Activated CD8-positive, alpha-beta T cell treated with anti-CD3 and anti-CD28 coated beads, Interleukin-2, amount 10 ng/mL, durations not matched to agents 7 days and 5 days (primary cell): ENCODE measurements at regions of chr11 and their contacts with region 1.

Region 1: GRCh38 chr11:114262681-114263512 is 33.3 kb upstream of the NNMT start:
- DNase-seq: peak; percentile 55
- ATAC-seq: peak; percentile 63
- H3K4me3 Mint-ChIP-seq: no peak overlapping the region
- H3K27ac Mint-ChIP-seq: no peak overlapping the region
- H3K4me1 Mint-ChIP-seq: peaks cover 24% of the 10 kb centered on the region
- H3K27me3 Mint-ChIP-seq: peaks cover 2% of the 10 kb centered on the region

Region 2: GRCh38 chr11:113806406-113806805 is 456.5 kb before region 1 on chr11:
- CTCF ChIA-PET with region 1: interaction called, 10 read pairs
- POLR2A ChIA-PET with region 1: no interaction called
- DNase-seq: peak; percentile 35
- ATAC-seq: peak; percentile 69
- H3K4me3 Mint-ChIP-seq: no peak overlapping the region
- H3K27ac Mint-ChIP-seq: no peak overlapping the region
- H3K4me1 Mint-ChIP-seq: no peaks in the 10 kb centered on the region
- H3K27me3 Mint-ChIP-seq: no peaks in the 10 kb centered on the region

Region 3: GRCh38 chr11:113994077-113994954 is 268.6 kb before region 1 on chr11:
- CTCF ChIA-PET with region 1: interaction called, 178 read pairs
- POLR2A ChIA-PET with region 1: no interaction called
- DNase-seq: peak; percentile 48
- ATAC-seq: no peak
- H3K4me3 Mint-ChIP-seq: no peak overlapping the region
- H3K27ac Mint-ChIP-seq: no peak overlapping the region
- H3K4me1 Mint-ChIP-seq: peaks cover 11% of the 10 kb centered on the region
- H3K27me3 Mint-ChIP-seq: peaks cover 14% of the 10 kb centered on the region

Region 4: GRCh38 chr11:114044042-114044871 is 218.6 kb before region 1 on chr11:
- CTCF ChIA-PET with region 1: interaction called, 33 read pairs
- POLR2A ChIA-PET with region 1: interaction called, 3 read pairs
- DNase-seq: no peak
- ATAC-seq: peak; percentile 49
- H3K4me3 Mint-ChIP-seq: no peak overlapping the region
- H3K27ac Mint-ChIP-seq: peak overlapping the region; percentile 26
- H3K4me1 Mint-ChIP-seq: peaks cover 17% of the 10 kb centered on the region
- H3K27me3 Mint-ChIP-seq: peaks cover 17% of the 10 kb centered on the region

Region 5: GRCh38 chr11:114080219-114080618 is 182.7 kb before region 1 on chr11:
- CTCF ChIA-PET with region 1: interaction called, 26 read pairs
- POLR2A ChIA-PET with region 1: no interaction called
- DNase-seq: no peak
- ATAC-seq: peak; percentile 37
- H3K4me3 Mint-ChIP-seq: no peak overlapping the region
- H3K27ac Mint-ChIP-seq: peak overlapping the region; percentile 35
- H3K4me1 Mint-ChIP-seq: peaks cover 72% of the 10 kb centered on the region
- H3K27me3 Mint-ChIP-seq: peaks cover 17% of the 10 kb centered on the region

Region 6: DNA sequence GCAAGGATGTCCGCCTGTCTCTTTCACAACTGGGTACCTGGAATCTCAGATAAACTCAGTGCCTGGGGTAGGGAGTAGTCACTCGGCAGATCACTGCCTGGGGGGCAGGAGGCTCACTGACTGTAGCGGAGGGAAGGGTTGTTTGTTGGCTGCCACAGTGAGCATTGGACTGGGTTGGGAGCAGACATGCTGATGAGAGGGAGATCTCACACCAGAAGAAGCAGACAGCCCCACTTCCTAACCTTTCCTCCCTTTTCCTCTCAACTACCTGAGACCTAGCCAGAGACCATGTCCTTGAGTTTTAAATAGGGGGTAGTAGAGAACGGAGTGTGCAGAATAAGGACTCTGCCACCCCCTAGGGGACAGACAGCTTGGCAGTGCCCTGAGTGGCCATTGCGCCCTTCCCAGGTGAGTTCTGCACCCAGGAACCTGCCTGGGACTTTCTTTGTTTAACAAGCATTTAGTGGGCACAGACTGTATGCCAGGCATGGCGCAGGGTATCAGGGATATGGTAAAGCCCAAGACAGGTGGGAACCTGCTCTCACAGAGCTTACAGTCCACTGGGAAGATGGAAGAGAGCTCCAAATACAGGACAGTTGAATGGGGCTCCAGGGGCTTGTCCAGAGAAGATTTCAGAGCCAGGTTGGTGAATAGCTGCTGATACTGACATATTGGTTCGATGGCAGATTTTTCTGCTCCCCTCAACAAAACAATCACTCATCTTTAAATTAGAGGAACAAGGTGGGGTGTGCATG is 82.4 kb before region 1 on chr11:
- CTCF ChIA-PET with region 1: interaction called, 29 read pairs
- POLR2A ChIA-PET with region 1: interaction called, 3 read pairs
- DNase-seq: no peak
- ATAC-seq: no peak
- H3K4me3 Mint-ChIP-seq: no peak overlapping the region
- H3K27ac Mint-ChIP-seq: peak overlapping the region; percentile 69
- H3K4me1 Mint-ChIP-seq: peaks cover 81% of the 10 kb centered on the region
- H3K27me3 Mint-ChIP-seq: no peaks in the 10 kb centered on the region

Region 7: GRCh38 chr11:114274637-114275036 is 11.7 kb after region 1 on chr11:
- CTCF ChIA-PET with region 1: interaction called, 18 read pairs
- POLR2A ChIA-PET with region 1: no interaction called
- DNase-seq: no peak
- ATAC-seq: no peak
- H3K4me3 Mint-ChIP-seq: no peak overlapping the region
- H3K27ac Mint-ChIP-seq: no peak overlapping the region
- H3K4me1 Mint-ChIP-seq: no peaks in the 10 kb centered on the region
- H3K27me3 Mint-ChIP-seq: peaks cover 46% of the 10 kb centered on the region

Region 8: DNA sequence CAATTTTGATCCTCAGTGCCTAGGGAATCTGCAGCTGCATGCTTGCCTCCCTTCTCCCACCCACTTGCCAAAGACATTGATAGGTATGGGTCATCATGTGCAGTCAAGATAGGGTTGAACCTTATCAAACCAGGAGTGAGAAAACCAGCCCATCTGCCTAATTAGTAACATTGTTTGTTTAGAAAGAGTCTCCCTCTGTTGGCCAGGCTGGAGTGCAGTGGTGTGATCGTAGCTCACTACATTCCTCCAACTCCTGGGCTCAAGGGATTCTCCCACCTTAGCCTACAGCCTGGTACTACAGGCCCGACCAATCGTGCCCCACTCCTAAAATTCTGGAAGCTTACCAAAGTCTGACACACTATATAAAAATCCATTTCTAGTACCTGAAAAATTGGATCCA is 132.8 kb after region 1 on chr11:
- CTCF ChIA-PET with region 1: no interaction called
- POLR2A ChIA-PET with region 1: no interaction called
- DNase-seq: no peak
- ATAC-seq: no peak
- H3K4me3 Mint-ChIP-seq: no peak overlapping the region
- H3K27ac Mint-ChIP-seq: no peak overlapping the region
- H3K4me1 Mint-ChIP-seq: peaks cover 18% of the 10 kb centered on the region
- H3K27me3 Mint-ChIP-seq: peaks cover 5% of the 10 kb centered on the region